Calu3 (cell line): ENCODE measurements at regions of chr21 and their contacts with region 1.

Region 1: GRCh38 chr21:34807146-34807880 is 138.5 kb downstream of the CLIC6 start:
- DNase-seq: peak; percentile 51
- H3K4me3 Mint-ChIP-seq: no peak overlapping the region
- H3K27ac Mint-ChIP-seq: peak overlapping the region; percentile 87
- H3K4me1 Mint-ChIP-seq: peaks cover 70% of the 10 kb centered on the region
- H3K27me3 Mint-ChIP-seq: no peaks in the 10 kb centered on the region
- CTCF ChIP-seq: no peak

Region 2: GRCh38 chr21:34367321-34367935 is 439.9 kb before region 1 on chr21:
- CTCF ChIA-PET with region 1: no interaction called
- intact Hi-C with region 1: no loop called
- DNase-seq: peak; percentile 47
- H3K4me3 Mint-ChIP-seq: no peak overlapping the region
- H3K27ac Mint-ChIP-seq: no peak overlapping the region
- H3K4me1 Mint-ChIP-seq: no peaks in the 10 kb centered on the region
- H3K27me3 Mint-ChIP-seq: peaks cover 23% of the 10 kb centered on the region
- CTCF ChIP-seq: peak; percentile 33

Region 3: DNA sequence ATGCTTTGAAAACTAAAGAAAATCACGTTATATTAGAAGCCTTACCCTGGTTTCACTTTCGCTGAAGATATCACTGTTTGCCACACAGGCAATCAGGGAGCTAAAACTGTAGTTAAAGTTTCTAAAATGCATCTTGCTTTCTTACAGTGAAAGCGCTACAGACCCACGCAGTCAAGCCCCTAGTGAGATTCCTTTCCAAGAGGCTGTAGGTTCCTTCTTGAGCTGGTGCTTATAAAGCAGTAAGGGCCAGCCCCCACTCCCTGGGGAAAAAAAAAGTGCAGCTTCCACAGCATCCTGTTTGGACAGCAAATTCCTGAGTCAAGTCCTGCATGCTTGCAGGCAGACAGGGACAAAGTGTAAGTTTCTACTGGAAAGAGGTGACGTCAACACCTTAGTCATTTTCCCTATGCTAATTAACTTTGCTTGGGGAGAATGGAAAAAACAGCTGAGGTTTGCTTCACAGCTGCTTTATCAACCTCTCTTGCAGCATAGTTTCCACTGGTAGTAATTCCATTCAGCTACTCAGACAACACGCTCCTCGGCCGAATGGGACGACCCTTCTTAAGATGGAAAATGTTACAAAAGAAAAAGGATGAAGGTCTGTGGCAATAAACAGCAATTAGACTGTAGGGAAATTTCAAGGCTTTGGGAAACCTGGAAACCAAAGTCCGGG is 280.6 kb before region 1 on chr21:
- CTCF ChIA-PET with region 1: no interaction called
- intact Hi-C with region 1: no loop called
- DNase-seq: peak; percentile 71
- H3K4me3 Mint-ChIP-seq: peak overlapping the region; percentile 74
- H3K27ac Mint-ChIP-seq: peak overlapping the region; percentile 78
- H3K4me1 Mint-ChIP-seq: peaks cover 20% of the 10 kb centered on the region
- H3K27me3 Mint-ChIP-seq: no peaks in the 10 kb centered on the region
- CTCF ChIP-seq: no peak

Region 4: GRCh38 chr21:34745557-34746255 is 61.6 kb before region 1 on chr21:
- CTCF ChIA-PET with region 1: interaction called, 8 read pairs
- intact Hi-C with region 1: loop called (anchors 10 kb)
- DNase-seq: peak; percentile 70
- H3K4me3 Mint-ChIP-seq: peak overlapping the region; percentile 37
- H3K27ac Mint-ChIP-seq: peak overlapping the region; percentile 58
- H3K4me1 Mint-ChIP-seq: peaks cover 30% of the 10 kb centered on the region
- H3K27me3 Mint-ChIP-seq: no peaks in the 10 kb centered on the region
- CTCF ChIP-seq: peak; percentile 63

Region 5: DNA sequence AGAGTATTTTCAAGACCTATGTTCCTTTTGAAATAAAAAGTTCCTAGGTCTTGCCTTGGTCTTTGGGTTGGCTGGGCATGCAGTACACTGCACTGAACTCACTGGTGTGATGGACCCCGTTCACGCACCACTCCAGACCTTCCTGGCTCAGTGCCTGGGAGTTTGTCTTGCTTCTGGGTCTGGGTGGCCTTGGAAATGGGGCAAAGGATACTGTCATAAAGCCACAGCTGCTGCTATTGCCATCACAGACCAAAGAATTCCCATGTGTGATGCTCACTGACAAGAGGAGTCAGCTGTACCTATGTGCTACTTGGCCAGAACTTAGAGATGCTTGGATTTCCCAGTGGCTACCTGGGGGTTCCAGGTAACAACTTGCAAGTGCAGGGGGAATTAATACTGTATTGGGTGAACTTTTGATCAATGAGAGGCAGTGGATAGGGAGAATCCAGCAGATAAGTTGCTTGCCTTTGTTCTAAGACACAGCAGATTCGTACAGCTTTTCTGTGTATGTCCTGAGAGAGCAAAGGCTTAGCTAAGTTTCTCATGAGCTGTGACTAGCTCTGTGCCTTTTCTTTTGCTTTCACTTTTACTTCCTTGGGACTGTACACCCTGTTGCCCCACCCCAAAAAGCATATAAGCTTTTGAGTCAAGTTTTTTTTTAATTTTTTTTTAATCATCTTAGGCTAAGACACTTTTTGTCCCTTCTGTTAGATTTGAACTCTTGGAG is 126.5 kb after region 1 on chr21:
- CTCF ChIA-PET with region 1: no interaction called
- intact Hi-C with region 1: no loop called
- DNase-seq: no peak
- H3K4me3 Mint-ChIP-seq: no peak overlapping the region
- H3K27ac Mint-ChIP-seq: no peak overlapping the region
- H3K4me1 Mint-ChIP-seq: peaks cover 24% of the 10 kb centered on the region
- H3K27me3 Mint-ChIP-seq: no peaks in the 10 kb centered on the region
- CTCF ChIP-seq: no peak

Region 6: DNA sequence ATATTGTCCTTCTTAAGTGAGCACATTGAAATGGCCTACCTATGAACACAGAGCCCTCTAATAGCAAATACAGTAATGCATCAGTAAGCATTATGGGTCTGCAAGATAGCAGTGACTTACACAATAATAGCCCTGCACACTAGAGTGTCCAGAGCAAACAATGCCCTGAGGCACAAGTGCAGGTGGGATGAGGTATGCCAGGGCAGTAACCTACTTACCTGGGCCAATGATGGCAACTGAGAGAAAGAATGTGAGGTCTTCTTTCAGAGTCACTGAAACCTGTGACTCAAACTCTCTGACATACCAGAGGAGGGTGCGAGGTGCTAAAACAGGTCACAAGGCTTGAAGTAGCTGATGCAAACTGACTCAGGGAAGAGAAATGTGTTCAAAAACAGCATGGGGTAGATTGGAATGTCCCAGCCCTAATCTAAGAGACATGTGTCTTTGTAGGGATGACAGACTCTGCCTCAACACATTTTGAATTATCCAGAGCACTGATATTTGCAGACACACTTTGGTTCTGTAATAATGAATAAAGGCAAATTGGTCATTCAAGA is 410.3 kb after region 1 on chr21:
- CTCF ChIA-PET with region 1: no interaction called
- intact Hi-C with region 1: no loop called
- DNase-seq: peak; percentile 79
- H3K4me3 Mint-ChIP-seq: no peak overlapping the region
- H3K27ac Mint-ChIP-seq: peak overlapping the region; percentile 95
- H3K4me1 Mint-ChIP-seq: peaks cover 46% of the 10 kb centered on the region
- H3K27me3 Mint-ChIP-seq: no peaks in the 10 kb centered on the region
- CTCF ChIP-seq: no peak